ENCODE measurements at regions of chr5 and their contacts with region 1.

Region 1: DNA sequence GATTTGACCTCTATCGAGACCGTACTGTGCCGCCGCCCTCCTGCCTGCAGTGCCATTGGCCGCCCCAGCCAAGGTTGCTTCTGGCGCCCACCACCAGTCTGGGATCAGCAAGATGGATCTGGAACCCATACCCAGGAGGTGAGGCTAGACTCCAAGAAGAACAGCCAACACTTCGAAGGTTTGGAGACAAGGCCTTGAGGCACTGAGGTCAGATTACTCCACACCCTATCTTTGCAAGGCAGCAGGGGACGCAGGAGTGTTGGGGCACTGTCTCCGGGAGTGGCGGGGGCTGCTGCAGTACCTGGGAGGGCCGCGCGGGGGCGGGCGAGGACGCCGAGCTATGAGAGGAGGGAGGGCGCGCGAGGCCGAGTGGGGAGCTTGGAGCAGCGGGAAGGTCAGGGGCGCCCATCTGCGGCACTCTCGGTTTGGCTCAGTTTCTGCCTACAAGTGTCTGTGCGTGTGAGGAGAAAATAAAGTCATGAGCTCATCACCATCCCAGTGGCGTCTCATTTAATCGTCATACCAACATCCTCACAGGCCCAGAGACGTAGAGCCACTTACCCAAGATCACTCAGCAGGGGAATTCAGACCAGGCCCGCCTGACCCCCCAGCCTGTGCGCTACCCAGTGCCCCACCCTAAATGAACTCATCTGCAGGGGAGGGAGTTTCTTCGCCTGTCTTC is 20.5 kb upstream of the PSD2 start:
- DNase-seq: peak; percentile 50 to 87
- H3K4me3 ChIP-seq: no peak overlapping the region
- H3K27ac ChIP-seq: no peak overlapping the region
- H3K4me1 ChIP-seq: no peaks in the 10 kb centered on the region
- H3K27me3 ChIP-seq: peaks cover 12% of the 10 kb centered on the region; the same call in 1 of the 2 replicates
- CTCF ChIP-seq: peak; percentile 99

Region 2: DNA sequence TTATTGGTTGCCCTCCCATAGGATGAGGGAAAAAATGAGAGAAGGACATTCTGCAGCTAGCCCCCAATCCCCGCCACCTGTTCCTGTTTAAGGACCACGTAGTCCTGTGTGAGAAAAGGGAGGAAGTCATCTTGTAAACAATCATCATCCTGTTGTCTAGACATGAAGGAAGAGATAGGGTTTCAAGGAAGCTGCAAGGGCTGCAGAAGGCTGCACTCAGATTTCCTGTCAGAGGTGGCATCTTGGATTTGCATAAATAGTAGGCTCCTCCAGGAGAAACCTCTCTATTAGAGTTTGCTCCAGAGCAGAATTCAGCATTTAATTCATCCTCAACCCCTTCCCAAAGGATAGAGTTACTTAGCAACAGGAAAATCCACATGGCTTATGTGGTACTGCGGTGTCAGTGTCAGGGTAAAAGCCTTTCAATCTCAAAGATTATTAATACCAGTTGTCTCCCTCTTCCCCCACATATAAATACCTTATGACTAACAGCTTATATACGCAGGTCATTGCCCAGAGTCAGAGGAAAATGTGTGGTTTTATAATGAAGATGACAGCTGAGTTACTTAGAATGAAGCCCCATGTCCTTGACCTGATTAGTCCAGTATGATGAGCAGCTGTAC is 331.2 kb before region 1 on chr5:
- CTCF ChIA-PET with region 1: no interaction called
- POLR2A ChIA-PET with region 1: no interaction called
- intact Hi-C with region 1: no loop called
- DNase-seq: peak in 1 of 2 experiments; percentile 49
- H3K4me3 ChIP-seq: no peak overlapping the region
- H3K27ac ChIP-seq: no peak overlapping the region
- H3K4me1 ChIP-seq: peaks cover 7% of the 10 kb centered on the region
- H3K27me3 ChIP-seq: no peaks in the 10 kb centered on the region
- CTCF ChIP-seq: no peak

Region 3: GRCh38 chr5:139690064-139690802 is 84.9 kb before region 1 on chr5:
- CTCF ChIA-PET with region 1: interaction called, 5 read pairs
- POLR2A ChIA-PET with region 1: no interaction called
- intact Hi-C with region 1: loop called (anchors 1 kb)
- DNase-seq: peak in 1 of 2 experiments; percentile 57
- H3K4me3 ChIP-seq: no peak overlapping the region
- H3K27ac ChIP-seq: no peak overlapping the region
- H3K4me1 ChIP-seq: no peaks in the 10 kb centered on the region
- H3K27me3 ChIP-seq: no peaks in the 10 kb centered on the region
- CTCF ChIP-seq: peak; percentile 74

Region 4: DNA sequence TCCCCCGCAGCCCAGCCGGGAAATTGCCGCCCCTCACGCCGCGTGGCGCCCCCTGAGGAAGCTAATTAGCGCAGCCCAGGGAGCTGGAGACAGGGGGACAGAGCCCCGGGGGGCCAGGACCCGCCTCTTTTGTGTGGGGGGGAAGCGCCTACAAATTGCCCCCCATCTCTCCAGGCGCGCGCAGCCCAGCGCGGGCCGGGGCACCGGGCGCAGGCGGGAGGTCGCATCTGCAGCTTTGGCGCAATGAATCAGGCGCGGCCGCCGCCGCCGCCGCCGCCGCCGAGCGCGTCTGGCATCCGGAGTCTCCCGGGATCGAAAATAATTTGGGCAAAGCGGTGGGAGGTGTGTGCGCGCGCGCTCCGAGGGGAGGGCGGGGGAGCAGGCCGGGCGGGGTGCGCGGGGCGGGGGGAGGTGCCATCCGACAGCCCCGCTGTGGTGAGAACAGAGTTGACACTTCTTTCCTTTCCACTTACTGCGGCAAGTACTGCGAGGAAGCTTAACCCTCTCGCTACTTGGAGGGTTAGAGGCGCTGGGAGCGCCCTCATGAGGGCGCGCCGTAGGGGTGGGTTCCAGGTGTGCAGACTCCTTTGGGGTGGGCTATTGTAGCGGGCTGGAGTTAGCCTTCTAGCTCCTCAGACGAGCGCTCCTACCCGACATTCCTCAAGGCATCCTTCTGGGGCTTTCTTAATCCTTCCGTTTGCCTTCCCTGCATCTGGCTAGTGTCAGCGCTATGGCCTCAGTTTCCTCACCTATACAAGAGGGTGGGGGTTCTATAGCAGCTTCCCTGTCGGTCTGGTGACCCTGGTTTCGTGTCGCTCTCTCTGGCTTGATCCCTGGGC is 63.8 kb before region 1 on chr5:
- CTCF ChIA-PET with region 1: interaction called, 11 read pairs
- POLR2A ChIA-PET with region 1: no interaction called
- intact Hi-C with region 1: no loop called
- DNase-seq: peak; percentile 46 to 50
- H3K4me3 ChIP-seq: peak overlapping the region; percentile 71
- H3K27ac ChIP-seq: no peak overlapping the region
- H3K4me1 ChIP-seq: peaks cover 5% of the 10 kb centered on the region
- H3K27me3 ChIP-seq: peaks cover 14% of the 10 kb centered on the region
- CTCF ChIP-seq: no peak; the same call in 1 of the 2 replicates

Region 5: DNA sequence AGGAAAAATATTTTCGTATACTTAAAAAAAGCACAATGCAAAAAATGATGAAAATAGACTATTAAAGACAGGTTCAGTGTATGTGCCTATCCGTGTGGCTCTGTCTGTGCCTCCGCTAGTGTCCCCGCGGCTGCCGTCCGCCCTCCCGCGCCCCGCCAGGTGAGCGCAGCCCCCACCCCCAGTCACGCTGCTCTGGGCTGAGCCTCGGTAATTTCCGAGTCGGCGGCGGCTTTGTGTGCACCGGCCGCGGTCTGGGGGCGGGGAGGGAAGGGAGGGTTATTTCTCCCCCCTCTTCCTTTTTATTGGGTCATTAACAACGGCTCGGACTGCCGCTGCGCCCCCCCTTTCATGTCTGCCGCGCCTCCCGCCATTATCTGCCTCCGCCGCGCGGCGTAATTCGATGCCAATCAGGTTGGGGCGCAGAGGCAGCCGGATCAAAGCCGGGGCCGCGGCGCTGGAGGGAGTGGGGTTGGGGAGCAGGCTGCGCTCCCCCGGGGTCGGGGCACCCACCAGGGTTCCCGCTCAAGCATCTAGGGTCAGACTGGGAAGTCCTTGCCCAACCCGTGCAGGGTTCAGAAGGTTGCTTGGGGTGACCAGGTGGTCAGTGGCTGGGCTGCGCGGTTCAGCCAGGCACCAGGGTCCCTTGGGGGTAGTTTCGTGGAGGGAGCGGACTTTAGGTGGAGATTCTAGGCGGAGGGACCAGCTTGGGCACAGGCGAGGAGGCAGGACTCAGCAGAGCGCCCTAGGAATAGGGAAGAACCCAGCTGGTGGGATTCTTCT is 19.0 kb before region 1 on chr5:
- CTCF ChIA-PET with region 1: interaction called, 10 read pairs
- POLR2A ChIA-PET with region 1: no interaction called
- intact Hi-C with region 1: no loop called
- DNase-seq: no peak
- H3K4me3 ChIP-seq: peak overlapping the region; percentile 42
- H3K27ac ChIP-seq: no peak overlapping the region
- H3K4me1 ChIP-seq: 0 out of 2 replicates have a peak, but pooled peaks cover 4% of the 10 kb centered on the region
- H3K27me3 ChIP-seq: peaks cover 32% of the 10 kb centered on the region
- CTCF ChIP-seq: no peak

Region 6: GRCh38 chr5:140072812-140073211 is 297.7 kb after region 1 on chr5:
- CTCF ChIA-PET with region 1: no interaction called
- POLR2A ChIA-PET with region 1: no interaction called
- intact Hi-C with region 1: no loop called
- DNase-seq: no peak
- H3K4me3 ChIP-seq: no peak overlapping the region
- H3K27ac ChIP-seq: no peak overlapping the region
- H3K4me1 ChIP-seq: no peaks in the 10 kb centered on the region
- H3K27me3 ChIP-seq: no peaks in the 10 kb centered on the region
- CTCF ChIP-seq: no peak

Measured in PC-9 (cell line).